ENCODE measurements at regions of chr2 and their contacts with region 1.

Region 1: GRCh38 chr2:168758970-168759820 is 43.2 kb upstream of the NOSTRIN start:
- DNase-seq: peak in 1 of 5 donors; percentile 21
- ATAC-seq: peak; percentile 52 to 83 (median 74)
- H3K4me3 ChIP-seq: no peak overlapping the region
- H3K27ac ChIP-seq: no peak overlapping the region
- H3K4me1 ChIP-seq: peaks cover 0 to 35% (median 14%) of the 10 kb centered on the region in 12 donors
- H3K27me3 ChIP-seq: no peaks in the 10 kb centered on the region
- CTCF ChIP-seq: peak; percentile 42 to 73 (median 61)
- POLR2A ChIP-seq: no peak

Region 2: DNA sequence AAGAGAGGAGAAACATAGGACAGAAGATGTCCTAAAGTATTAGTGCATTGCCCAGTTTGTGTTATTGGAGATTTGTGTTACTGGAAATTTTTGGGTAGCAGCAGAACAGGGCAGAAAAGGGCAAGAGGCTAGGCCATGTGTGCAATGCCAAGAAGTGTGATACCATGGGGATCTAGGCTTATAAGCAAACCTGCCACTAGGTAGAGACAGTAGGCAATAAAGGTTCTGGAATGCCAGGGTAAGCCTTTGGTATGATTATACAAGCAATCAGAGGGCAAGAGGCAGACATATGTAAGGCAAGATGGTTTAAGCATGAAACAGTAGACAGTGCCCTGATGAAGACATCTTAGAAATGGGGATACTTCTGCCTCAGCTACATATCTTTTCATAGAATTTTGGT is 315.4 kb before region 1 on chr2:
- intact Hi-C with region 1: loop called in 1 of 10 experiments (anchors 5 kb)
- DNase-seq: no peak
- ATAC-seq: peak in 3 of 4 donors; percentile 42 to 68 (median 58)
- H3K4me3 ChIP-seq: no peak overlapping the region
- H3K27ac ChIP-seq: no peak overlapping the region
- H3K4me1 ChIP-seq: peaks cover 0 to 7% (median 0%) of the 10 kb centered on the region in 12 donors
- H3K27me3 ChIP-seq: no peaks in the 10 kb centered on the region
- CTCF ChIP-seq: peak in 9 of 12 donors; percentile 10 to 35 (median 17)
- POLR2A ChIP-seq: no peak

Region 3: DNA sequence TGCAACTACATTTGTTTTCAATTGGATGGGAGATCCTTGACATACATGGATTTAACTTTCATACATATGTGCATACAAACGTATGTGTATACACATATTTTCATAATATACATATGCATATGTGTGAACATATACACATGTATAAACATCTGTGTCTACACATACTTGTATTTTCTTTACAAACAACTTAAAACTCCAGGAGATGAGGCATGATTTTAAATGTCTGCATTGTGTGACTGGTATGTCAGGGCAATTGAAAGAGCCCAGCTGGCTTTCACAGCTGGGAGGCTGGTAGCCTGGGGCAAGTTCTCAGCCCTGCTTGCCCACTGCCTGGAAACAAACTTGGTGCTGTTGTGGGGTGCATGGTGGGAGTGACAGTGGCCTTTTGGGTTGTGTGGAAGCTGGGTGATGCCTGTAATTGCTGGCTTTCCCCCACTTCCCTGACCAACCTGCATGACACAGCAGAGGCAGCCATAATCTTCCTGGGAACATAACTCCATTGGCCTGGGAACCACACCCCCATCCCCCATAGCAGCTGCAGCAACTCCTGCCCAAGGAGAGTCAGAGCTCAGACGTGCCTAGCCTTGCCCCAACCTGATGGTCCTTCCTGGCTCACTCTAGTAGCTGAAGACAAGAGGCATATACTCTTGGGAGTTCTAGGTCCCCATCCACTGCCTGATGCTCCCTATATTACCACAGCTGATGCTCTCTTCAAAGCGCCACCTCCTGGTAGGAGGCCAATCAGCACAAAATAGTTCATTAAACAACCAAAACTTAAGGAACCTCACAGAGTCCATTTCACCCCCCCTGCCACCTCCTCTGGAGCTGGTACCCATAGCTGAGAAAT is 144.8 kb before region 1 on chr2:
- intact Hi-C with region 1: loop called in 1 of 10 experiments (anchors 10 kb)
- DNase-seq: no peak
- ATAC-seq: no peak
- H3K4me3 ChIP-seq: no peak overlapping the region
- H3K27ac ChIP-seq: no peak overlapping the region
- H3K4me1 ChIP-seq: peaks cover 0 to 27% (median 0%) of the 10 kb centered on the region in 12 donors
- H3K27me3 ChIP-seq: no peaks in the 10 kb centered on the region
- CTCF ChIP-seq: no peak
- POLR2A ChIP-seq: no peak

Region 4: DNA sequence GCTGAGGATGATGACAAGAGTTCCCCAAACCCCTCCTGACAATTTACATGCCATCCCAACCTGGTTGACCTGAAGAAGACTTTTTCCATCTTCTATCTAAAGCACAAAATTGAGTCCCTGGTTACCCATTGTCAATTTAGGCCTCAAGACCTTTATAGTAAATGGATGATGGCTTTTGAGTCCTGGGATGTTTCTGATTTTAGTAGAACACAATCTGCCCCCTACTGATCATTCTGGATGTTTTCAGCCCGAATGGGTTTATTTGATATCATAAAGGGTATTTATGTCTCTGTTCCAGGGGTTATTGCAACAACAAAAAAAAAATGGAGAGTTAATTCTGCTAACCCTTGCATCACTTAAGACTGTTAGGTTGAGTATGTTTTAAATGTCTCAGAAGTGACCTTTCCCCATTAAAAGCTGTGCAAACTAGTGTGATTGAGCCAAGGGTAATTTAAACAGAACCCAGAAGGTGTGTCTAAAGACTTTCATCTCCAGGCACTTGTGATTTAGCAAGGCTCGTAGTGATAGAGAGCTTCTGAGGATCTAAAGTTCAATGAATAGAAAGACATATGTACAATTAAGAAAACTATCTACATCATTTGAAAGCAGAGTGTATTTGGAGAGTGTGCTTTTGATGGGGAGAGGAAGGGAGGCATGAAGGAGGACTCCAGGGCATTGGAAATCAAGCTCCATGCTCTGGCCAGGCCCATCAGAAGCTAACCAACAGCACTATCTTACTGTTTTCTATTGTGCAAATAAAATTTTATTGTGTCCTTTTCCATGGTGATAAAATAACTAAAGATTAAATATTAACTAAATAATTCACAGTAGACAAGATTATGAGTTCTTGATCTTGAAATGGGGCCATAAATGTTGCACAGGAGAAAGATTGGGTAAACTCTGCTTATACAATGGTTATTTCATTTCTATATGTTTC is 53.4 kb before region 1 on chr2:
- intact Hi-C with region 1: loop called in 1 of 10 experiments (anchors 10 kb)
- DNase-seq: no peak
- ATAC-seq: peak in 1 of 4 donors; percentile 7
- H3K4me3 ChIP-seq: no peak overlapping the region
- H3K27ac ChIP-seq: no peak overlapping the region
- H3K4me1 ChIP-seq: peaks cover 0 to 13% (median 3%) of the 10 kb centered on the region in 12 donors
- H3K27me3 ChIP-seq: no peaks in the 10 kb centered on the region
- CTCF ChIP-seq: peak in 7 of 12 donors; percentile 15 to 43 (median 24)
- POLR2A ChIP-seq: no peak

Region 5: GRCh38 chr2:168835969-168836368 is 76.8 kb after region 1 on chr2:
- intact Hi-C with region 1: no loop called
- DNase-seq: no peak
- ATAC-seq: no peak
- H3K4me3 ChIP-seq: no peak overlapping the region
- H3K27ac ChIP-seq: no peak overlapping the region
- H3K4me1 ChIP-seq: no peaks in the 10 kb centered on the region
- H3K27me3 ChIP-seq: no peaks in the 10 kb centered on the region
- CTCF ChIP-seq: no peak
- POLR2A ChIP-seq: no peak

Measured in heart left ventricle (tissue), 16 donors.